Posterior cingulate gyrus (tissue), 11 donors: ENCODE measurements at regions of chr19 and their contacts with region 1.

Region 1: DNA sequence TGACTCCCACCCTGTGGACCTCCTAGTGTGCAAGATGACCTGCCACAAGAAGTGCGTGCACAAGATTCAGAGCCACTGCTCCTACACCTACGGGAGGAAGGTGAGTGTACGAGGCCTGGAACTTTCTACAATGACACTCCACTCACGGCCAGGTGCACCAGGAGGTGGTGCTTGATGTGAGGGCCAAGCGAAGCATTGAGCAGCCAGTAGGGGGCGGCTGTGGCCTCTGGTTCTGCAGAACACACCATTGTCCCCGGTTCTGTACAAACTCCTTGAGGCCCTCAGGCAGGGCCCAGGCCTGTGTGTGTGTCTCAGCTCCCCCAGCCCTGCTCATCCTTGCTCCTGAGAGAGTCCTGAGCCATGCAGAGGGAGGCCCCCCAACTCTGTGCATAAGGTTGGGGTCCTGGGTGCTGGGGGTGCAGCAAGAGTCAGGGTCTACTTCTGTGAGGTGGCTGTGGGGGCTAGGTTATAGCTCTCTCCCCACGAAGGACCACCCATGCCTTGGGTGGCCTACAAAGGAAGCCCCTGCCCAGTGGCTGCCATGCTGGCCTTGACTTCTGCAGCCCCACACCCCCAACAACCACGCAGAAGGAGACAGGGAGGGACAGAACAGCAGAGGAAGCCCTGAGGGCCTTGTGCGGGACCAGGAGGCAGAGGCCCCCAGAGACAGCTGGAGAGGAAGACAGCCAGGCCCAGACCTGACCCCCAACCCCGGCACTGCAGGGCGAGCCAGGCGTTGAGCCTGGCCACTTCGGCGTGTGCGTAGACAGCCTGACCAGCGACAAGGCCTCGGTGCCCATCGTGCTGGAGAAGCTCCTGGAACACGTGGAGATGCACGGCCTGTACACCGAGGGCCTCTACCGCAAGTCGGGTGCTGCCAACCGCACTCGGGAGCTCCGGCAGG is 9.7 kb upstream of the USE1 start:
- DNase-seq: peak in 8 of 10 donors; percentile 22 to 94 (median 60)

Region 2: DNA sequence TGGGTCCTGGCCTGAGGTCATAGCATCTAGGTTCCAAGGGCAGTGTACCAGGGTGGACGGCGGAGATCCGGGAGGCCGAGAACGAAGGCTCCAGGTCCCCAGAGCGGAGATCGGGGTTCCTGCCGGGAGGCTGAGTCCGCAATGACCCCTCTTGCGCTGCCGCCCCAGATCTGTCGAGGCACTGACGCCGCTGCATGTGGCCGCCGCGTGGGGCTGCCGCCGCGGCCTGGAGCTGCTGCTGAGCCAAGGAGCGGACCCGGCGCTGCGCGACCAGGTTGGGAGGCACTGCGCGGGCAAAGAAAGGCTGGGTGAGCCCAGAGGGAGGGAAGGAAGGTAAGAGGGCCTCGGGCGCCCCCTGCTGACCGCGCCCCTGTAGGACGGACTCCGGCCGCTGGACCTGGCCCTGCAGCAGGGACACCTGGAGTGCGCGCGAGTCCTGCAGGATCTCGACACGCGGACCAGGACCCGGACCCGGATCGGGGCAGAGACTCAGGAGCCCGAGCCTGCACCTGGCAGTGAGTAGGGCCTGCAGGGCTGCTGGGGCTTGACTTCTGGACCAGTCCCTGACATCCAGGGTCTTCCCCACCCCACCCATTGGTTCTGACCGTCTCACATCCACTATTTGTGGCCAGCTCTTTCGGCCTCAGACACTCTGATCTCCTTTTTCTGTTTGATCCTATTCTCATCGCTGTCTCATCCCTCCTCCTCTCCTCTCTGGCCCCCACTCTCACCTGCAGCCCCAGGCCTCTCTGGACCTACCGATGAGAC is 77.2 kb after region 1 on chr19:
- intact Hi-C with region 1: loop called (anchors 1 kb)
- DNase-seq: peak; percentile 60 to 97 (median 78)